Motor neuron (in vitro differentiated cells): ENCODE measurements at regions of chr2 and their contacts with region 1.

Region 1: GRCh38 chr2:212548450-212548819 is 9.8 kb upstream of the ERBB4 start:
- ATAC-seq: peak in 7 of 8 experiments; percentile 44 to 89 (median 59)
- H3K4me3 ChIP-seq: no peak overlapping the region
- H3K27ac ChIP-seq: no peak overlapping the region
- H3K4me1 ChIP-seq: peaks cover 8 to 23% of the 10 kb centered on the region in 2 donors

Region 2: DNA sequence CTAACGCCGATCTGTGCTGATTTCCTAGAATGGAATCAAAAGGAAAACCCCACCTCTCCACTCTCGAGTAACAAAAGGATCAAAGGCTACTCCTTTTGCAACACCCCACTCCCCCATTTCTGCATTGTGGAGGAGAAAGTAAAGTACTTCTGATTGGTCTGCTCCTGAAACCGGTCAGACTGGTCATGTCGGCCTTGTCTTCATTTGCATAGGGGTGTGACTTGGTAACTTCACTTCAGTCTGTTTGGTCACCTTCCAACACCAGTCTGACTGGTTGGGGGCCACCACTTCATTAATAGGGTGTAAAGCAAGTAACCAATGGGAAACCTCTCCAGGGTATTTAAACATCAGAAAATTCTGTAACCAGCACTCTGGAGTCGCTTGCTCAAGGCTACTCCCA is 781.7 kb before region 1 on chr2:
- in situ Hi-C with region 1: loop called in 2 of 9 experiments (anchors 25 kb)
- ATAC-seq: peak in 4 of 8 experiments; percentile 29 to 80 (median 58)
- H3K4me3 ChIP-seq: no peak overlapping the region
- H3K27ac ChIP-seq: no peak overlapping the region
- H3K4me1 ChIP-seq: peaks cover 10 to 17% of the 10 kb centered on the region in 2 donors